ENCODE measurements at regions of chr17 and their contacts with region 1.

Region 1: GRCh38 chr17:74379495-74380085 is 12.3 kb downstream of the GPR142 start:
- DNase-seq: peak; percentile 94
- H3K4me3 Mint-ChIP-seq: no peak overlapping the region
- H3K27ac Mint-ChIP-seq: no peak overlapping the region
- H3K4me1 Mint-ChIP-seq: peaks cover 4% of the 10 kb centered on the region
- H3K27me3 Mint-ChIP-seq: peaks cover 9% of the 10 kb centered on the region

Region 2: GRCh38 chr17:74361230-74362068 is 18.1 kb before region 1 on chr17 and contains the start of gene BTBD17:
- CTCF ChIA-PET with region 1: interaction called, 67 read pairs
- POLR2A ChIA-PET with region 1: no interaction called
- DNase-seq: peak; percentile 37
- H3K4me3 Mint-ChIP-seq: no peak within 1 kb of the TSS
- H3K27ac Mint-ChIP-seq: no peak within 1 kb of the TSS
- H3K4me1 Mint-ChIP-seq: peaks cover 2% of the 10 kb centered on the region
- H3K27me3 Mint-ChIP-seq: peaks cover 26% of the 10 kb centered on the region
- total RNA-seq, gene BTBD17: not detected

Region 3: DNA sequence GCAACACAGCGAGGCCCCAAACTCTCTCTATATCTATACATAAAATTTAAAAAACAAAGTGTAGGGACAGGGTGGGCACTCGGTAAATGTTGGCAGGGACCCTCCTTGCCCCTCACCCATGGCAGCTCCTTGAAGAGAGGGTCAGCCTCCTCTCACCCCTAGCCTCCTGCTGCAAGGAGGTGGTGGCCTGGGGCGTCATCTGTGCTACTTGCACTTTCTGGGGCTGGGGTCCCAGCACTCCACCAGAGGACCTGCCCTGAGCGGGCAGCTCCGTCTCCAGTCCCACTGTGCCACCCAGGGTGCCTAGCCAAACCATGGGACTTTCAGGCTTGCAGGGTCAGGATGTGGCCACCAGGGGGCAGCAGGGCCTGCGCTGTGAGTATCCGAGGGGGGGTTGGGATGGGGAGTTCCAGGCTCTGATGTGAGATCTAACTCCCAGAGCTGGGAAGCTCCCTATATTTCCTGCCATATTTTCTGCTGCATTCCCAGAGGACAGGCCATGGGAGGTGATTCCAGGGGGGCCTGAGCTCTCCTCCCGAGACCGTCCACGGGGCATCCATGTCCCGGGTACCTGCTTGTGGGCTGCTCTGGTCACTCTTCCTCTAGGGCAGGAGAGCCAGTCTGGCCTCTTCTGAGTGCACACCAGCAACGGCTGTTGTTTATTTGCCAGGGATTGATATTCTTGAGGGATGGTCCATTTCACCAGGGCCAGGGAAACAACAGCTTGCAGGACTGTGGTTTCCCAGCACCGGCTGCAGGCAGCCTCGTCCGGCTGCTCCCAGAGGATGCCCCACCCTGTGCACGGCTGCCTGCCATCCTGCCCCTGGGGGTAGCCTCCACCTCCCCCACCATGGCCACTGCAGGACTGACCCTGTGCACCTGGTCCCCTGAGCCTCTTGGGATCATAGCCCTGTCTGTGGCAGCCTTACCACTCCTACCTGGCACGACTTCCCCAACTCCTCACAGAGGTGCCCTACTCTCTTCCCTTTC is 11.2 kb before region 1 on chr17:
- CTCF ChIA-PET with region 1: interaction called, 67 read pairs
- POLR2A ChIA-PET with region 1: no interaction called
- DNase-seq: peak; percentile 74
- H3K4me3 Mint-ChIP-seq: no peak overlapping the region
- H3K27ac Mint-ChIP-seq: no peak overlapping the region
- H3K4me1 Mint-ChIP-seq: peaks cover 16% of the 10 kb centered on the region
- H3K27me3 Mint-ChIP-seq: peaks cover 1% of the 10 kb centered on the region

Region 4: DNA sequence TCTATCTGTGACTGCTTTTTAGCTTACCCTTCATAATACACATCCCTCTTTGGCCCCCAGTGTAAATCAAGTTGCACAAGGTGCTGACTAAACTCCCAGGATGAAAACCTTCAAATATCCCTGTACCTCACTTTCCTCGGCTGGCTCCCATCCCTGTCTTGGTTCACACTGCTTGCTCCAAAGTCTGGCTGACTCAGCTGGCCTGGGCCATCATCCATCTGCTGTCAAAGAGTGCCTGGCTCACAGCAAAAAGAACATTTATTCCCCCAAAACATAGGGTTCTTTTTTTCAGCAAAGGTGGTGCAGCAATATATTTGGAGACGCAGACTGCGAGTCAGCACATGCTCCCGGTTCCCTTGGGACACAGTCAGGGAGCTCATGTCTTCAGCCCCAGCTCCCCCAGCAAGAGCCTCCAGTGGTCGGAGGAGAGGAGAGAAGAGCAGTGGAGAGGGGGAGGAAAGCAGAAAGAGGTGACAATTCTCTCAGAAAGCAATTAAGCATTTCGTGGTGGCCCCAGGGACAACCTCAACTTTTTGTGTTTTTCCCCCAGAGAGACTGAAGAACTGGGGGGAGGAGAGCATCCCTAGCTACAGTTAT is 13.9 kb after region 1 on chr17:
- CTCF ChIA-PET with region 1: interaction called, 16 read pairs
- POLR2A ChIA-PET with region 1: no interaction called
- DNase-seq: no peak
- H3K4me3 Mint-ChIP-seq: no peak overlapping the region
- H3K27ac Mint-ChIP-seq: no peak overlapping the region
- H3K4me1 Mint-ChIP-seq: no peaks in the 10 kb centered on the region
- H3K27me3 Mint-ChIP-seq: peaks cover 6% of the 10 kb centered on the region

Region 5: GRCh38 chr17:74442670-74443515 is 63.3 kb after region 1 on chr17:
- CTCF ChIA-PET with region 1: interaction called, 14 read pairs
- POLR2A ChIA-PET with region 1: interaction called, 14 read pairs
- DNase-seq: no peak
- H3K4me3 Mint-ChIP-seq: no peak overlapping the region
- H3K27ac Mint-ChIP-seq: no peak overlapping the region
- H3K4me1 Mint-ChIP-seq: peaks cover 2% of the 10 kb centered on the region
- H3K27me3 Mint-ChIP-seq: peaks cover 9% of the 10 kb centered on the region

Region 6: DNA sequence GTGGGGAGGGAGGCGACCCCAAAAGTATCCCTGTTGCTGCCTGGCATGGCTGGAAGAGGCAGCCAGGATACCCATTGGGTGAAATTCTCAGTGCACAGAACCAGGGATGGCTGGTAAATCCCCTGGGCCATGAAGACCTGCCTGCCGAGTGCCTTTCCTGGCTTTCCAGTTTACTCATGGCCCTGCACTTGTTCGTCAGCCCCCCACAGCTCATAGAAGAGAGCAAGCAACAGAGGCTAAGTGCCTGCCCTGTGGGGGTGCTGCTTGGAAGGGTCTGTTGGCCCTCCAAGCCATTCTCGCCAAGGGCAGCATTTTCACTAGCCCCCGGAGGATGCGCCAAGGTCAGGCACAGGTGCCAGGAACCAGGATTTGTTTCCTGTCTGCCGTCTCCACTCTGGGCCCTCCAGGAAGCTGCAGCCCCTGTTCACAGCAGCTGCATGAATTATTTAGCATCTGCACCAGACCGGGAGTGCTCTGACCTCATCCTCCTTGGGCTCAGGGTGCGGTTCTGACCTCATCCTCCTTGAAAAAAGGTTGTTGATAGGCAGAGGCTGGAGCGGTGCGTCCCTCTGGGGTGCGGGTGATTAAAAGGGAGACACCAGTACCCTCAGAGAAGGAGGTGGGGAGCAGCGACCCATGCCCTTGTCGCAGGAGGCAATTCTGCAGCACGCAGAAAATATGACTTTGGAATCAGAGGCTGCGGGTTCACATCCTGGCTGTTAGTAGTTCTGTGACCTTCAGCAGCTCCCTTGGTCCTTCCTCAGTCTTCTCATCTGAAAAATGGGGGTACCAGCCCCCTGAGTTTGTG is 72.6 kb after region 1 on chr17:
- CTCF ChIA-PET with region 1: interaction called, 15 read pairs
- POLR2A ChIA-PET with region 1: no interaction called
- DNase-seq: peak; percentile 35
- H3K4me3 Mint-ChIP-seq: no peak overlapping the region
- H3K27ac Mint-ChIP-seq: peak overlapping the region; percentile 50
- H3K4me1 Mint-ChIP-seq: peaks cover 18% of the 10 kb centered on the region
- H3K27me3 Mint-ChIP-seq: peaks cover 24% of the 10 kb centered on the region

Region 7: DNA sequence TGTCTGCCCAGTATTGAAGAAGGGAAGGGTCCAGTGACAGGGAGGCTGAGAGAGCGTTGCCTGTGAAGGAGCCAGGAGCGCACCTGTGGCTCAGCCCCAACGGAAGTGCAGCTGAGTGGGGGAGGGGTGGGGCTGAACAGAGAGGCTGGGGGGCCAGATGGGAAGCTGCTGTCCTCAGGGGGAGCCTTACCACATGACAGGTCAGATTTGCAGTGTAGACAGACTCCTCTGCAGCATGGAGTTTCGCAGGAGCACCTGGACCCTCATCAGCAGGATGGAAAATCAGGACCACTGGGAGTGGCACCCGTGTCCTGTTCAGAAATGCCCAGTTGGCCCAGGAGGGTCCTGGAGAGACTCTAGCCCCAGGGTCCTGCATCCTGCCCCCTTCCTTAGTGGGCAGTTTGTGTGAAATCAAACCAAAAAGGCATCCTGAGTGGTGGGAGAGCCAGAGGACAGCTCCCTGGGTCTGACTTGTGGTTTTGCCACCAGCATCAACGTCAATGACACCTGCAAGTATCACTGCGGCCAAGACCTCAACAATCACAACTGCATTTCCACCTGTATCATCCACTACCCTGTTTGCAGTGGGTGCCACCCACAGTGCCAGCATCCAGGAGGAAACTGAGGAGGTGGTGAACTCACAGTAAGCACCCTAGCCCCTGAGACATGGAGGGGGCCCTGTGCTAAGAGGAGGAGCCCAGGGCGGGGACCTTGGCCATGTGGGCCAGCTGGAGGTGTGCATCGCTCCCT is 94.6 kb after region 1 on chr17:
- CTCF ChIA-PET with region 1: no interaction called
- POLR2A ChIA-PET with region 1: no interaction called
- DNase-seq: peak; percentile 29
- H3K4me3 Mint-ChIP-seq: no peak overlapping the region
- H3K27ac Mint-ChIP-seq: peak overlapping the region; percentile 78
- H3K4me1 Mint-ChIP-seq: peaks cover 54% of the 10 kb centered on the region
- H3K27me3 Mint-ChIP-seq: peaks cover 7% of the 10 kb centered on the region